ENCODE measurements at regions of chr11 and their contacts with region 1.

Region 1: GRCh38 chr11:85854557-85855340 is 434 bp upstream of the CCDC83 start:
- DNase-seq: peak; percentile 96

Region 2: GRCh38 chr11:85941380-85941973 is 86.7 kb after region 1 on chr11:
- intact Hi-C with region 1: loop called (anchors 5 kb)
- DNase-seq: no peak

Region 3: GRCh38 chr11:86068951-86069407 is 214.2 kb after region 1 on chr11 and contains the start of gene PICALM:
- intact Hi-C with region 1: loop called (anchors 10 kb)
- DNase-seq: peak; percentile 99
- total RNA-seq, gene PICALM: 213 TPM

Region 4: DNA sequence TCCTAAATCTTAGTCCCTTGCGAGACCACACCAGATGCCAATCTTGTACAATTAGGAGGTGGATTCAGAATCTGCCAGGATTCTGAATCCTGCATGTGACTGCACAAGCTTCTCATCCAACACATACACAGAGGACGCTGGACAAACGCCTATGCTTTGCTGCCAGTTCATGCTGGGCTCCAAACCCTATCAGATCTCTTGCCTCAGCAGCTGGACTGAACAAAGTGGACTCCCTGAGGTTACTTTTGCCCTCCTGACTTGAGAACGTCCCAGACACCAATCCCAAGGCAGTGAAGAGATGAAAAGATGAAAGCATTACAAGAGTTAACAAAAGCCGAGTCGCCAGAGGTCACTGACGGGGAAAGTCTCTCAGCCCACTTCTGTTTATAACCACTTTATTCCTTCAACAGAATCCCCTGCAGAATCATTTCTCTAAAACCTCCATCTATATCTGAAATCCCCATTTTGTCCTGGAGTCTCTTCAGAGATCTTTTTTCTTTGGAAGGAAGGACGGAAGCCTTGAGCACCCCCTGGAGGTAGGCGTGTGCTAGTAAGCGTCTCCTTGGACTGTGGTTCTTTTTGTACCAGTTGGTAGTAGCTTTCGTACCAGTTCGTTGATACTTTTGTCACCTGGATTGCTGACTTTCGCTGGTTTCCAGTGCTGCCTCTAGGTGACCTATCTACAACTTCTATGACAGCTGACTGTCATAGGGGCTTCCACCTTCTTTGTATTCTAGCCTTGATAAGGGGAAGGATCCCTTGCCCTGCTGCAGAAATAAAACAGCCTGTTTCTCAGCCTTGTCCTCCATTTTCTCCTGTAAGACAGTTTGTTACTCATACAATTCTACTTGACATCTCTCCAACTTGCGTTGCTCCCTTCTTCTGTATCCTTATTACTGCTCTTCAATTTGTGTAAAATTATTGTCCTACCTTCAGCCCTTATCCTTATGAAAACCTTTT is 363.7 kb after region 1 on chr11:
- intact Hi-C with region 1: loop called (anchors 5 kb)
- DNase-seq: no peak

Region 5: DNA sequence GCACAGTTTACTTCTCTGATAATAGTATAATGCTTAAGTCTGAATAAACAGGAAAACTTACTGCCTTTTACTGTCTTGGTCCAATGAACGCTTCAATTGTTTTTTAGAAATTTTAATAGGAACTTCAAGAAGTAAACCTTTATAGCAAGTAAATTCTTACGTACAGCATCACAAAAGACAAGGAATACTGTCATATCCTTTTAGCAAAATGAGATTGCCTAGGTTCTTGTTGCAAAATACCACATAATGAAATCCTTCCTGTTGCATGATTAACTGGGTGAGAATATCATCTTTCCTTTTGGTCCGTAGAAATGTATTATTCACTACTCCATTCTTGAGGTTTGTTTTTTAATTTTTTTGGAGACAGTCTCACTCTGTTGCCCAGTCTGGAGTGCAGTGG is 425.0 kb after region 1 on chr11:
- intact Hi-C with region 1: loop called (anchors 5 kb)
- DNase-seq: no peak

Region 6: GRCh38 chr11:86302100-86302793 is 447.5 kb after region 1 on chr11 and contains the start of gene HIKESHI:
- intact Hi-C with region 1: loop called (anchors 5 kb)
- DNase-seq: peak; percentile 99
- total RNA-seq, gene HIKESHI: 37.4 TPM

Region 7: GRCh38 chr11:86818466-86819192 is 963.9 kb after region 1 on chr11:
- intact Hi-C with region 1: loop called (anchors 10 kb)
- DNase-seq: no peak

Measured in cardiac septum (tissue), 1 donor.